ENCODE measurements at regions of chr16 and their contacts with region 1.

Region 1: DNA sequence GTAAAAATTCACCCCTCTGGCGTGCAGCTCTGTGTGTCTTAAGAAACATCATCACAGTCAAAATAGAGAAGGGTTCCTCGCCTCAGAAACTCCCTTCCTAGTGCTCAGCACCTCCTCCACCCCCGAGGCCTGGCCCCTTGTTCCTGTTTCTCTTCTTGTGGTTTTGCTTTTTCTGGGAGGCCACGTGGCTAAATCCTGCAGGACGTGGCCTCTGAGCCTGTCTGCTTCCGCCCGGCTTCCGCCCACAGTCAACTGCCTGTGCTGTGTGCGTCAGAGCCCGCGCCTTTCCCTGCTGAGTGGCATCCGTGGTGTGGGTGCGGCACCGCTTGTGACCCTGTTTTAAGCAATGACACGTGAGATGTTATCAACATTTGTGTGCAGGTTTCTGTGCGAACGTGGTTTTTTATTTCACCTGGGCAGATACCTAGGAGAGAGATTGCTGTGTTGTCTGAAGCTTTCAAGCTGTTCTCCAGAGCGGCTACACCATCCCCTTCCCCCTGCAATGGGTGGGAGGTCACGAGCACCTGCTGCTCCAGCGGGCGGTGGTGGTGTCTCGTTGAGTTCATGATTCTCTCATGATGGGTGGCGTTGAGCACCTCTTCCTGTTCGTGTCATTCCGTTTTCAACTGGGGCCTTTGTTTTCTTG is 21.7 kb downstream of the ACSF3 start:
- DNase-seq: peak; percentile 80 to 99 (median 91)
- ATAC-seq: peak; percentile 82
- H3K4me3 ChIP-seq: peak overlapping the region; percentile 37 to 40
- H3K4me3 Mint-ChIP-seq: peak overlapping the region; percentile 81
- H3K27ac ChIP-seq: peak overlapping the region; percentile 69 to 84
- H3K27ac Mint-ChIP-seq: peak overlapping the region; percentile 99
- H3K4me1 ChIP-seq: peaks cover 49% of the 10 kb centered on the region
- H3K4me1 Mint-ChIP-seq: peaks cover 38% of the 10 kb centered on the region
- H3K27me3 ChIP-seq: no peaks in the 10 kb centered on the region
- H3K27me3 Mint-ChIP-seq: no peaks in the 10 kb centered on the region
- CTCF ChIP-seq: no peak

Region 2: DNA sequence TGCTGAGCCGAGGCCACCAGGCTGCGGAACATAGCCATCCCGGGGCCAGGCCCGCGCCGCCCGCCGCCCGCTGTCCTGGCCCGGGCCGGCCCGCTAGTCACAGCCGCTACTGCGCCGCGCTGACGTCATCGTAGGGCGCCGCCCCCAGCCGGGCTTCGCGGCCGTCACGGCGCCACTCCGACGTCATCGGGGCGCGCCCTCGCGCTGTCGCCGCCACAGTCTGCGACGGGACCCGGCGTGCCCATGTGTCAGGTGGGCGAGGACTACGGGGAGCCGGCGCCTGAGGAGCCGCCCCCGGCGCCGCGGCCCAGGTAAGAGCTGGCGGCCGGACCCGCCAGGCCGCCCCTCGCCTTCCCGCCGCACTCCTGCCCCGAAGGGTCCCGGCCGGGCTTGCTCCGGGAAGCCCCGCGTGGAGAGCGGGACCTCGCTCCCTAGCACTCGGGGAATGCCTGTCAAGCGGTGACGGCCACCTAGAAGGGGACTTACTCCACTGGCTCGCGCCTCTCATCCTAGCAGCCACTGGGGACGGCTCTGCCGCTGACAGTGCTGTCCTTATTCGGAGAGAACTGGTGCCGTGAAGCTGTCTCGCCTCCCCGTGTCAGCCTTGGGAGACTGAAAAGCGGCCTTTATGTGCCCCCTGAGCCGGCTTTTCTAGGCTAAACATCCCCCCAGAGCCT is 408.9 kb before region 1 on chr16 and contains the starts of genes CTU2 and RNF166:
- CTCF ChIA-PET with region 1: no interaction called
- POLR2A ChIA-PET with region 1: no interaction called
- intact Hi-C with region 1: loop called in 1 of 2 experiments (anchors 10 kb)
- DNase-seq: peak; percentile 79 to 97 (median 91)
- ATAC-seq: peak; percentile 55
- H3K4me3 ChIP-seq: peak within 1 kb of the TSS; percentile 80 to 89
- H3K4me3 Mint-ChIP-seq: peak within 1 kb of the TSS; percentile 90
- H3K27ac ChIP-seq: peak within 1 kb of the TSS; percentile 88 to 91
- H3K27ac Mint-ChIP-seq: peak within 1 kb of the TSS; percentile 98
- H3K4me1 ChIP-seq: peaks cover 30% of the 10 kb centered on the region
- H3K4me1 Mint-ChIP-seq: peaks cover 44% of the 10 kb centered on the region
- H3K27me3 ChIP-seq: no peaks in the 10 kb centered on the region
- H3K27me3 Mint-ChIP-seq: no peaks in the 10 kb centered on the region
- CTCF ChIP-seq: no peak
- total RNA-seq, gene CTU2: 59.5 to 60.4 TPM
- total RNA-seq, gene RNF166: 371 to 406 TPM

Region 3: GRCh38 chr16:89093602-89094251 is 21.6 kb before region 1 on chr16 and contains the start of gene ACSF3:
- CTCF ChIA-PET with region 1: interaction called, 4 read pairs
- POLR2A ChIA-PET with region 1: interaction called, 47 read pairs
- intact Hi-C with region 1: loop called (anchors 1 kb)
- DNase-seq: peak; percentile 30 to 86 (median 65)
- ATAC-seq: peak; percentile 10
- H3K4me3 ChIP-seq: peak within 1 kb of the TSS; percentile 66 to 74
- H3K4me3 Mint-ChIP-seq: peak within 1 kb of the TSS; percentile 94
- H3K27ac ChIP-seq: peak within 1 kb of the TSS; percentile 58 to 66
- H3K27ac Mint-ChIP-seq: peak within 1 kb of the TSS; percentile 97
- H3K4me1 ChIP-seq: peaks cover 49% of the 10 kb centered on the region
- H3K4me1 Mint-ChIP-seq: peaks cover 51% of the 10 kb centered on the region
- H3K27me3 ChIP-seq: no peaks in the 10 kb centered on the region
- H3K27me3 Mint-ChIP-seq: peaks cover 13% of the 10 kb centered on the region
- CTCF ChIP-seq: no peak
- total RNA-seq, gene ACSF3: 33.5 to 37.0 TPM

Region 4: DNA sequence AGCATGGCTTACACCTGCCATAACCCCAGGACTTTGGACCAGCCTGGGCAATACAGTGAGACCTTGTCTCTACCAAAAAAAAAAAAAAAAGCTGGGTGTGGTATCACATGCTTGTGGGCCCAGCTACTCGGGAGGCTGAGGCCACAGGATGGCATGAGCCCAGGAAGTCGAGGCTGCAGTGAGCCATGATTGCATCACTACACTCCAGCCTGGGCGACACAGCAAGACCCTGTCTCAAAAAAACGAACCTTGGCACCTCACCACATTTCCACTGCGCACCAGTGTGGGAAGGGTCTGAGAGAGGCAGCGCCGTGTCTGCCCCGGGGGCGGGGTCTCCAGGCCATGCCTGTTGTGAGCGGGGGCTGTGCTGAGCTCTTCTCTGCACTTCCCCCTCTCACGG is 15.4 kb before region 1 on chr16:
- CTCF ChIA-PET with region 1: interaction called, 4 read pairs
- POLR2A ChIA-PET with region 1: interaction called, 47 read pairs
- intact Hi-C with region 1: loop called (anchors 1 kb)
- DNase-seq: peak in 3 of 9 experiments; percentile 17 to 61 (median 60)
- ATAC-seq: no peak
- H3K4me3 ChIP-seq: no peak overlapping the region
- H3K4me3 Mint-ChIP-seq: no peak overlapping the region
- H3K27ac ChIP-seq: no peak overlapping the region
- H3K27ac Mint-ChIP-seq: peak overlapping the region; percentile 71
- H3K4me1 ChIP-seq: peaks cover 66% of the 10 kb centered on the region
- H3K4me1 Mint-ChIP-seq: peaks cover 55% of the 10 kb centered on the region
- H3K27me3 ChIP-seq: no peaks in the 10 kb centered on the region
- H3K27me3 Mint-ChIP-seq: no peaks in the 10 kb centered on the region
- CTCF ChIP-seq: no peak